Mammary epithelial cell (primary cell): ENCODE measurements at regions of chr1 and their contacts with region 1.

Region 1: DNA sequence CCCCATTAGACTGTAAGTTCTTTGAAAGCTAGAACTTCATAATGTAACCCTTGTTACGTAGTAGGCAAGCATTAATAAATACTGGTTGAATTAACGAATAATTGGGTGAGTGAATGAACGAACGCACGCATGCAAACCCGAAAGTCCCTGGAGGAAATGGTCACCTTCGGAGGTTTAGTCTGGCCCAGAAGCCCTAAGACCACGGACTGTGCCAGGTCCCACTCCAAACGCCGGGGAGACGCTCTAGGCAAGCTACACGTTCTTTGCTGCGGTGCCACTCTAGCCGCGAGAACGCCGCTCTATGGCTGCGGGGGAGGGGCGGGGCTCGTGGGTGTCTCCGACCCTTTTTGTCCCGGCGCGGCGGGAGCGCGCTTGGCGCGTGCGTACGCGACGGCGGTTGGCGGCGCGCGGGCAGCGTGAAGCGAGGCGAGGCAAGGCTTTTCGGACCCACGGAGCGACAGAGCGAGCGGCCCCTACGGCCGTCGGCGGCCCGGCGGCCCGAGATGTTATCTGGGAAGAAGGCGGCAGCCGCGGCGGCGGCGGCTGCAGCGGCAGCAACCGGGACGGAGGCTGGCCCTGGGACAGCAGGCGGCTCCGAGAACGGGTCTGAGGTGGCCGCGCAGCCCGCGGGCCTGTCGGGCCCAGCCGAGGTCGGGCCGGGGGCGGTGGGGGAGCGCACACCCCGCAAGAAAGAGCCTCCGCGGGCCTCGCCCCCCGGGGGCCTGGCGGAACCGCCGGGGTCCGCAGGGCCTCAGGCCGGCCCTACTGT is at the start of gene KDM1A:
- DNase-seq: peak; percentile 97
- H3K4me3 ChIP-seq: peak within 1 kb of the TSS; percentile 81 to 99 (median 86)
- H3K27ac ChIP-seq: peak within 1 kb of the TSS; percentile 91
- H3K4me1 ChIP-seq: no peaks in the 10 kb centered on the region
- H3K27me3 ChIP-seq: no peaks in the 10 kb centered on the region
- CTCF ChIP-seq: peak; percentile 19 to 25
- total RNA-seq, gene KDM1A: 65.1 to 65.8 TPM

Region 2: DNA sequence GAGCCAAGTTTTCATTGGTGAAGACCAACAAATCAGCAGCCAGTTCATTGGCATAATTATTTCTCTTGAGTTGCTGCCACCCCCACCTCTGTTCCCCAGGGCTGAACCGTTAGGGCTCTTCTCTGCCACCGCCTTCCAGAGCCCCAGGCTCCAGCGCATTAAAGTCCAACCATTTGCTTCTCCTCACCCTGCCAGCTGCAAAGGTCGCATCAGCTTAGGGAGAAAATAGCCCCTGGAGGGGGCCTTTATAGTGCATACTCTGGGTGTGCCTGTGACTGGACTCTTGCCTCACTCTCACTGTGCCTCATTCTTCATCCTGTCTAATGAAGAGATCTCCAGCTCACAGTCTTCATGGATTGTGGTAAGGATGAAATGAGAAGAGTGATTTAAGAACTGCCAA is 50.4 kb after region 1 on chr1:
- CTCF ChIA-PET with region 1: no interaction called
- dilution Hi-C with region 1: no loop called
- in situ Hi-C with region 1: no loop called
- intact Hi-C with region 1: loop called (anchors 5 kb)
- DNase-seq: no peak
- H3K4me3 ChIP-seq: no peak overlapping the region
- H3K27ac ChIP-seq: no peak overlapping the region
- H3K4me1 ChIP-seq: no peaks in the 10 kb centered on the region
- H3K27me3 ChIP-seq: no peaks in the 10 kb centered on the region
- CTCF ChIP-seq: no peak